Calu3 (cell line): ENCODE measurements at regions of chr3 and their contacts with region 1.

Region 1: GRCh38 chr3:11770477-11771391 is 76.0 kb downstream of the TAMM41 start:
- DNase-seq: peak; percentile 90
- H3K4me3 Mint-ChIP-seq: peak overlapping the region; percentile 72
- H3K27ac Mint-ChIP-seq: peak overlapping the region; percentile 98
- H3K4me1 Mint-ChIP-seq: peaks cover 22% of the 10 kb centered on the region
- H3K27me3 Mint-ChIP-seq: no peaks in the 10 kb centered on the region
- CTCF ChIP-seq: no peak

Region 2: DNA sequence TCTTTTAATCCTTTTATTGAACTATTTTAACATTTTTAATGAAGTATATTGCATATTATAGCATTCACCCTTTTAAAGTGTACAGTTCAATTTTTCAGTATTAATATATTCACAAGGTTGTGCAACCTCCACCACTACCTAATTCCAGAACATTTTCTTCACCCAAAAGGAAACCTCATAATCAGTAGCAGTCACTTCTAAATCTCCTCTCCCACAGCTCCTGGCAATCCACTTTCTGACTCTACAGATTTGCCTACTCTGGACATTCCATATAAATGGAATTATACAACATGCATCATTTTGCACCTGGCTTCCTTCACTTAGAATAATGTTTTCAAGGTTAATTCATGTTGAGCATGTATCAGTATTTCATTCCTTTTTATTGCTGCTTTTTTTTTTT is 671.4 kb before region 1 on chr3:
- CTCF ChIA-PET with region 1: no interaction called
- intact Hi-C with region 1: no loop called
- DNase-seq: no peak
- H3K4me3 Mint-ChIP-seq: no peak overlapping the region
- H3K27ac Mint-ChIP-seq: no peak overlapping the region
- H3K4me1 Mint-ChIP-seq: peaks cover 7% of the 10 kb centered on the region
- H3K27me3 Mint-ChIP-seq: no peaks in the 10 kb centered on the region
- CTCF ChIP-seq: no peak

Region 3: DNA sequence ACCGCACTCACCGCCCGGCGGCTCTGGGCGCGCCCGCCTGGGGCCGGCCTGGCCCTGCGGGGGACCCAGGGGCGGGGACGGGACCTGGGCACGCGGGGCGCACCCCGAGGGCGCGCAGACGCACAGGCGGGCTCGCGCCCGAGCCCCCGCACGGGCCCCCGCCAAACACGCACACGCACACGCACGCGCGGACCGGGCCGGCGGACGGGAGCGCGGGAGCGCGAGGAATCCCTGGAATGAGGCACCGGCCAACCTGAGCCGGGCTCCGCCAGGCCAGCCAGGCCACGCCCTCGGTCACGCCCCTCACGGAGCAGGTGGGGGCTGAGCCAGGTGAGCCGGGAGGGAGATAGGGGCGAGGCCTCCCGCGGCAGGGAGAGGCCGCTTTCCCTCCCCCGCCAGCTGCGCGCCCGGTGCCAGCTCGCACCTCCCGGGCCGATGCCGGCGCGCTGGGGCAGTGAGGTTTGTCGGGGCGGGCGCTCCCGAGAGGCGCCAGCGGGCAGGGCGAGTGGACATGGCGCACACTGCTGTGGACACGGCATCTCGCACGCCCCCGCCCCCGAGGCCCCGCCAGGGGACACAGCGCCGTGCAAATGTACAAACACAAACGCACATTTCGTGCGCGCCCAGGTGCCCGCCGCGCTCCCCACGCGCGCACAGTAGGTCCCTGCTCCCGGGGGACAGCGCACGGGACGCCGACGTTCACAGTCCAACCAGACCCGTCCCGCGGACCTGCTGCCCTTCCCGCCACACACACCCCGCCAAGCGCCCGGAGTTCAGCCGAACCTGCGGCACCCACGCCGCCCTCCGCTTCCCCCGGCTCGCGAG is 51.1 kb before region 1 on chr3:
- CTCF ChIA-PET with region 1: no interaction called
- intact Hi-C with region 1: loop called (anchors 2 kb)
- DNase-seq: peak; percentile 99
- H3K4me3 Mint-ChIP-seq: peak overlapping the region; percentile 99
- H3K27ac Mint-ChIP-seq: no peak overlapping the region
- H3K4me1 Mint-ChIP-seq: peaks cover 26% of the 10 kb centered on the region
- H3K27me3 Mint-ChIP-seq: peaks cover 5% of the 10 kb centered on the region
- CTCF ChIP-seq: no peak

Region 4: DNA sequence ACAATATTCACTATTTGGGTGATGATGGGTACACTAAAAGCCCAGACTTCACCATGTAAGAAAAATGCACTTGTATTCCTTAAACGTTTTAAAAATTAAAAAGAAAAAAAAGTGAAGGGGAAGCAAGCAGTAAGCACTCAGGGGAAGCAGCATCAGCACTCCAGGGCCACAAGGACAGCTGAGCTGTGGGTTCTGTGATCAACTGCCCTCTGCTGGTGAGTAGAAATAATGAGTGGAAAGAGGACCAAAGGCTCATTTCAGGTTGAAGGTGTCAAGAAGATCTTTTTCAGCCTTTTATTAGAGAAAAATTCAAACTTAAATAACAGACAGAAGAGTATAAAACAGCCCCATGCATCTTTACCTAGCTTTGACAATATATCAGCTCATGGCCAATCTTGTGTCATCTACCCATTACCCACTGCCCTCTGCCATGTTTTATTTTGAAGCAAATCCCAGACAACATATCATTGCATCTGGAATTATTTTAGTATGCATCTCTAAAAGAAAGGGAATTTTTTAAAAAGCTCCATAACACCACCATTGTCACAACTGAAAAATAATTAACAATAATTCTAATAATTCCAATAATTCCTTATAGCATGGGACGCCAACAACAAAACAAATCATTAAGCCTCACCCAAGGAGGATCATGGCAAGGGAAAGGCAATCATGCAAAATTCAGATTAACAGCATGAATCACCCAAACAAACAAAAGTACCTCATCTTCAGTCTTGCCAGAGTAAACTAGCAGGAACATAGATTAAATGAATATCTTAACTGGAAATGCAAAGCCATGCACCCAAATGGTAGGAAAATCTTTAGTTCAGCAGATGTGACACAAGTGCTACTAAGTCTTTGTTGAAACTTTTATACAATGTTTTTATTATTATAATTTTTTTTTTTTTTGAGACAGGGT is 33.5 kb after region 1 on chr3:
- CTCF ChIA-PET with region 1: no interaction called
- intact Hi-C with region 1: loop called (anchors 2 kb)
- DNase-seq: peak; percentile 43
- H3K4me3 Mint-ChIP-seq: no peak overlapping the region
- H3K27ac Mint-ChIP-seq: no peak overlapping the region
- H3K4me1 Mint-ChIP-seq: peaks cover 8% of the 10 kb centered on the region
- H3K27me3 Mint-ChIP-seq: no peaks in the 10 kb centered on the region
- CTCF ChIP-seq: peak; percentile 70

Region 5: DNA sequence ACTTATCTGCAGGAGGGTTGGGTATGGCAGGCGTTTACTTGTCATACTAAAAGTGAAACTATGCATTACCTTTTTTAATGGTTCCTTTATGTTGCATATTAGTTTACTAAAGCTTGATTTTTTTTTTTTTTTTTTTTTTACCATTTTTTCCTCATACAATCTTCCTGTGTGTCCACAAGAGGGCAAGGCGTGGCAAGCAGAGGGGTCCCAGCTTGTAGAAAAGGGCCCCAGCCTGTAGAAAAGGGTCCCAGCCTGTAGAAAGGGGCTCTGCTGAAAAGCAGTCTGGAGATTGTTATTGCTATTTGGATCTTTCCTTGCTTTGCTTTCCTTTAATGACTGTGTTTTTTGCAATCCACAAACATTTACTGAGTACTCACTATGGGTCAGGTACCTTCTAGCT is 808.0 kb after region 1 on chr3:
- CTCF ChIA-PET with region 1: no interaction called
- intact Hi-C with region 1: no loop called
- DNase-seq: no peak
- H3K4me3 Mint-ChIP-seq: no peak overlapping the region
- H3K27ac Mint-ChIP-seq: no peak overlapping the region
- H3K4me1 Mint-ChIP-seq: peaks cover 8% of the 10 kb centered on the region
- H3K27me3 Mint-ChIP-seq: no peaks in the 10 kb centered on the region
- CTCF ChIP-seq: no peak